Lower leg skin (tissue), 4 donors: ENCODE measurements at regions of chr7 and their contacts with region 1.

Region 1: GRCh38 chr7:138981332-138982203 is at the start of gene KIAA1549:
- DNase-seq: peak in 1 of 2 donors; percentile 86
- H3K4me3 ChIP-seq: peak within 1 kb of the TSS; percentile 58
- CTCF ChIP-seq: no peak
- POLR2A ChIP-seq: no peak
- total RNA-seq, gene KIAA1549: 0.27 to 2.8 (median 0.78) TPM

Region 2: DNA sequence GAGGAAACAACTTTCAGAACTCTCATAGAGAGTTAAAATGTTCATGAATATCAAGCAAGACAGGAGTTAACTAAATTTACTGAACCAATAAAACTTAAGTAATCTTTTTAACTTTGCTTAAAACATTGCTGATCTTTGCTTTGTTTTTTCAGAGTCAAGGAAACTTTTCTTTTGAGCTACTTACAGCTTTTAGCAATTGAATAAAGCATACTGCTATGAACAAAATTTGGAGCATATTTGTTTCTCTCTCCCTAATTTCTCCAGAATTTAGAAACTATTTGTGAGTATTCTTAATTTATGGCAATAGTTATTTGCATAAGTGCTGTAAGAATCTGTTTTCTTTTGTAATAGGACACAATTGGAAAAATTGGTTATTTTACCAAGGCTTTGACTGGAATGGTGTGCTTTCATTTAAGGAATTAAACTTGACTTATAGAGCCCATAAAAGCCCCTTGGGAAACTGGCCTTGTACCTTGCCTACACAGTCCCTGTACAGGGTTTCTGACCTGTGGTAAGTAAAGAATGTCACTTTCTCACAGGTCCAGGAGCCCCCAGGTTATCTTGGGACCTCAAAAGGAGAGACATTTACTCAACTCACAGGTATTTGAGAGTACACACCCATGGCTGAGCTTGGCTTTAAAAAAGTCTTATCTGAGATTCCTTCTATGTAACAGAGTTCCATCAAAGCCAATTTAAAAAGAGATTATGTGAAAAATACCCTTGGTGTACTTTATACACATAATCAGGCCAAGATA is 22.9 kb after region 1 on chr7:
- intact Hi-C with region 1: loop called (anchors 1 kb)
- DNase-seq: no peak
- H3K4me3 ChIP-seq: no peak overlapping the region
- CTCF ChIP-seq: no peak
- POLR2A ChIP-seq: no peak